ENCODE measurements at regions of chr1 and their contacts with region 1.

Region 1: DNA sequence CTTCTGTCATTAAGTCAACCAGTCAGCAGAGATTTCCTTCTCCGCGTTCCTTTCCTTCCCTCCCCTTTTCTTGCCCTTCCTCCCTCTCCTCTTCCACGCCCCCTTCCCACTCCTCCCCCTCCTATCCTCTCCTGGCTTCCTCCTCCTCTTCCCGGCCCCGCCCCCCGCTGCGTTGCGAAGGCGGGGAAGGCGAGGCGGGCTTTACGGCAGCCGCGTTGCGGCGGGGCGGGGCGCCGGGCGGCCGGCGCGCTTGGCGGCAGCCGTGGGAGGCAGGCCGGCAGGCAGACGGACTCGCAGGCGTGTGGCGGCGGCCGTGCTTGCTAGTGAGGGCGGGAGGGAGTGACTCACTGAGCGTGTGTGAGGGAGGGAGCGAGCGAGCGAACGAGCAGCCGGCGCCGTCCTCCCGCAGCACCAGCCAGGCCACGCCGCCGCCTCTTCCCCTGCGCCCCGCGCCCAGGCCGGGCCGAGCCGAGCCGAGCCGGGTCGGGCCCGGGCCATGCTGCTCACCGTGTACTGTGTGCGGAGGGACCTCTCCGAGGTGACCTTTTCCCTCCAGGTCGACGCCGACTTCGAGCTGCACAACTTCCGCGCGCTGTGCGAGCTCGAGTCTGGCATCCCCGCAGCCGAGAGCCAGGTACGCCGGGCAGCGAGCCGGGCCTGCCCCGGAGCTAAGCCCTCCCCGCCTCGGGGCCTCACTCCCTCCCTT is at the start of gene DDI2:
- DNase-seq: peak; percentile 98
- ATAC-seq: peak; percentile 95
- total RNA-seq, gene DDI2: 20.4 TPM

Region 2: GRCh38 chr1:15526490-15527339 is 90.6 kb before region 1 on chr1 and contains the start of gene DNAJC16:
- intact Hi-C with region 1: loop called (anchors 5 kb)
- DNase-seq: peak; percentile 98
- ATAC-seq: peak; percentile 69
- total RNA-seq, gene DNAJC16: 14.6 TPM

Region 3: DNA sequence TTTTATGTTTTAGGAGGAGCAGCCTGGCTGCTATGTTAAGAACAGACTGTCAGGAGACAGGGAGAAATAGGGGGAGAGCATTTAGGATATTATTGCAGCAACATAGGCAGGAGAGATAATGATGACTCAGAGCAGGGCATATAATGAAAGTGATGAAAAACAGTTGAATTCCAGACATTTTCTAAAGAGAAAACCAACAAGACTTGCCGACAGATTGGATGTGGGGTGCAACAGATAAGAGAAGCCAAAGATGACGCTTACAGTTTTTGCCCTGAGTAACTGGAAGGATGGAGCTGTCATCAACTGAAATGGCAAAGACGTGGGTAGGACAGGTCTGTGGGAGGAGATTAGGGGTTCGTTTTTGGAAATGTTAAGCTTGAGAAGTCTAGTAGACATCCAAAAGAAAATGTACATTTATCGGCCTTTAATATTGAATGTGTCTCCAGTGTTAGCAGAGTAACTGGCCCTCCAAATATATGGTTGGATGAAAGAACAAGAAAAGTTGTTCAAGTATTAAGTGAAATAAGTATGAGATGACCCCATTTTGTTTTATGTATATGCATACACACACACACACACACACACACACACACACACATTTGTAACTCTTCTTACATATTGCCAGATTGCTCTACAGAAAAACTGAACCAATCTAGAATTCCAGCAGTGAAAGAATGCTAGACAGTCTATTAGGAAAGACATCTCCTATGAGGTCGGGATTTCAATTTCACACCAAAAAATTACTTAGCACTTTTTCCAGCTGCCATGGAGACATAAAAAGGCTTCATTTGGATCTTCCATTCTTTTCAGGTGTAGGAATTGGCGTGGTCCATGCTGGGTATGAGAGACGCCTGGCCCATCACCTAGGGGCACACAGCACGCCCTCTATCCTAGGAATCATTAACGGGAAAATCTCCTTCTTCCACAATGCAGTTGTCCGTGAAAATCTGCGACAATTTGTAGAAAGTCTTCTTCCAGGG is 73.4 kb before region 1 on chr1:
- intact Hi-C with region 1: no loop called
- DNase-seq: no peak
- ATAC-seq: no peak

Region 4: DNA sequence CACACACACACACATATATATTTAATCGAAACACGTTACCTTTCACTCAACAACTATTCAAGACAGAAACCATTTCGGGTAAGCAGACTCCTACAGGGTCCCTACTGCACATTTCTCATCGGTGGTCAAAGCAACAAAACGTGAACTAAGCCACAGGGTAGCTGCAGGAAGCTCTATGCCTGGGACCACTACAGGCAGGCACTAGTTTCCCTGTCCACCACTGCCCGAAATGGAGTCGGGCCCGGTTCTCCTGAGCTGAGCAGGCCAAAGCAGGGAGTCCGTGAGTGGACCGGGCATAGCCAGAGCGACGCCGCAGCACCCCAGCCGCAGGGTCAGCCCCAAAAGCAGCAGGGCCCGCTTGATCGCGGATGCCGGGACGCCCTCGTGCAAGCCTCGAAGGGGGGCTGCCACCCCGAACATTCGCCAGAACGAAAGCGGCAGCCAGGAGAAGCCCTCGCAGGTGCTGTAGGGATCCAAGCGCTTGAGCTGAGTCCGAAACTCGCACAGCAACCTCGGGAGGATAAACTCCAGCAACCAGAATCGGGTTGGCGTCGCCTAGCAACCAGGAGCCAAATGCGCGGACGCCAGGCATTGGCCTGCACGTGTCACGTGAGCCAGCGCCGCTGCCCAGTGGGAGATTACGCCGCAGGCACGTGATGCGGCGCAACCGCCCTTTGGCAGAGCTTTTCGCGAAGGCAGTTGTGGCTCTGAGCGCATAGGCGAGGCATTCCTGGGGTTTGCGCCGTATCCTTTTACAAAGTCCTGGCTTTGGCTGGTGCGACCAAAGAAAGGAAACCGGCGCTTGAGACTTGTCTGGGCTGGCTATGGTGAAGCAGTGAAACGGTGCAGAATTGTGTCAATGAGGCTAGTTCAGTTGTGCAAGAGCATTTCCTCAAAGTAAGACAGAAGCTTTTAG is 14.0 kb before region 1 on chr1:
- intact Hi-C with region 1: loop called (anchors 2 kb)
- DNase-seq: peak; percentile 100
- ATAC-seq: peak; percentile 98

Region 5: GRCh38 chr1:15656464-15656863 is 39.1 kb after region 1 on chr1:
- intact Hi-C with region 1: no loop called
- DNase-seq: no peak
- ATAC-seq: peak; percentile 72

Region 6: DNA sequence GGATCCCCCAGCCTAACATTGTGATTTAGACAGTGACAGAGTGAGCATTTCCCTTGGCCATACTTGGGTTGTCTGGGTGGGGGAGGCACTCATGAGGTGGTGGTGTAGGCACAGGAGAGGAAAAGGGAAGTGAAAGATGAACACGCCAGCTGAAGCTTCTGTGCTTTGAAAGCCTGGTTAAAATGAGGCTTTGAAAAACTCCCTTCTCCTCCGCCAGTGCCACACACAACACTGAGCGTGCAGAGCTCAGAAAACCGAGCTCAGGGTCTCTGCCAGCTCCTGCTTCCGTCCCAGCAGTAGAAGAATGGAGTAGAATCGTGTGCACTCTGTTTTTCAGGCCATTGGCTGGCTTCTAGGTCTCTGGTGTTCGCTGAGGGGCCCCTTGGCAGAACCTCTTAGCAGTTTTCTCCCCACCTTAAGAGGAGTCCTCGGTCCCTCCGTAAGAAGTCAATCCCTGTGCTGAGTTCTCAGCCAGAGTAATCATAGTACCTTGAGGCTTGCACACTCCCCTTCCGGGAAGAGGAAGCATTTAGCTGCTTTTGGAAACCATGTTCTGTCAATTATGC is 79.7 kb after region 1 on chr1:
- intact Hi-C with region 1: no loop called
- DNase-seq: no peak
- ATAC-seq: peak; percentile 54

Region 7: GRCh38 chr1:15803354-15803753 is 186.0 kb after region 1 on chr1:
- intact Hi-C with region 1: no loop called
- DNase-seq: no peak
- ATAC-seq: no peak

Region 8: DNA sequence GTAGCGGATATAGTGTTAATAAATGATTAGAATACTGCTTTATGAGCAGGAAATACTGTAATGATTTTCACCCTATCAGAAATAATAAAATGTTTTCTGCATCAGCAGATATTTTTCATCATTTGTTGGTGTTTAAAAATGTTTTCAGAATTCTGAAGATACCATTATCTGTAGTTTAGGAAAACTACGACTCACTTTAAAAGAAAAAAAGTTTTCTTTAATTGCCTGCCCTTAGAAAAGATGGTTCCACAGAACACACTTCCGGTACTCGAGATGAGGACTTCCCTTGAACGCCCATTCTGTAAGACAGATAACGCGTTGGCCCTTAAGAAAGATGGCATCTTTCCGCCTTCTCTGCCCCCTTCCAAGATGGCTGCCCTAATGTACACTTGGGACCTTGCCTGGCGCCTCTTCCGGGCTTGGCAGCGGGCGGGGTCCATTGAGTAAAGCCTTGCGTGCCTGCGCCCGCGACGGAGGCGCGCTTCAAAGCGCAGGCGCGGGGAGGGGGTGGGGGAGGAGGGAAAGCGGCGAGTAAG is 749.5 kb after region 1 on chr1 and contains the start of gene SZRD1:
- intact Hi-C with region 1: loop called (anchors 10 kb)
- DNase-seq: peak; percentile 98
- ATAC-seq: peak; percentile 90
- total RNA-seq, gene SZRD1: 108 TPM

Measured in Right ventricle myocardium inferior (tissue), 1 donor.